ENCODE measurements at regions of chr1 and their contacts with region 1.

Region 1: GRCh38 chr1:26787706-26788514 is at the start of gene PIGV:
- DNase-seq: peak; percentile 91
- ATAC-seq: peak; percentile 90 to 92
- total RNA-seq, gene PIGV: 6.1 to 6.7 TPM

Region 2: GRCh38 chr1:26500488-26501175 is 287.3 kb before region 1 on chr1:
- intact Hi-C with region 1: loop called in 1 of 2 experiments (anchors 10 kb)
- DNase-seq: peak; percentile 69
- ATAC-seq: peak; percentile 95

Region 3: GRCh38 chr1:26602378-26602959 is 185.4 kb before region 1 on chr1:
- intact Hi-C with region 1: loop called (anchors 1 to 5 kb)
- DNase-seq: no peak
- ATAC-seq: peak; percentile 41 to 43

Region 4: GRCh38 chr1:26695356-26696118 is 92.4 kb before region 1 on chr1 and contains the start of gene ARID1A:
- intact Hi-C with region 1: loop called (anchors 2 to 5 kb)
- DNase-seq: peak; percentile 96
- ATAC-seq: peak; percentile 73 to 74
- total RNA-seq, gene ARID1A: 34.5 to 38.5 TPM

Region 5: GRCh38 chr1:26754086-26754874 is 33.6 kb before region 1 on chr1:
- intact Hi-C with region 1: loop called in 1 of 2 experiments (anchors 5 kb)
- DNase-seq: no peak
- ATAC-seq: no peak

Region 6: GRCh38 chr1:26900001-26900814 is 112.3 kb after region 1 on chr1 and contains the start of gene GPATCH3:
- intact Hi-C with region 1: no loop called
- DNase-seq: peak; percentile 95
- ATAC-seq: peak; percentile 94 to 96
- total RNA-seq, gene GPATCH3: 8.6 to 11.4 TPM